GM12878 (cell line): ENCODE measurements at regions of chr10 and their contacts with region 1.

Region 1: DNA sequence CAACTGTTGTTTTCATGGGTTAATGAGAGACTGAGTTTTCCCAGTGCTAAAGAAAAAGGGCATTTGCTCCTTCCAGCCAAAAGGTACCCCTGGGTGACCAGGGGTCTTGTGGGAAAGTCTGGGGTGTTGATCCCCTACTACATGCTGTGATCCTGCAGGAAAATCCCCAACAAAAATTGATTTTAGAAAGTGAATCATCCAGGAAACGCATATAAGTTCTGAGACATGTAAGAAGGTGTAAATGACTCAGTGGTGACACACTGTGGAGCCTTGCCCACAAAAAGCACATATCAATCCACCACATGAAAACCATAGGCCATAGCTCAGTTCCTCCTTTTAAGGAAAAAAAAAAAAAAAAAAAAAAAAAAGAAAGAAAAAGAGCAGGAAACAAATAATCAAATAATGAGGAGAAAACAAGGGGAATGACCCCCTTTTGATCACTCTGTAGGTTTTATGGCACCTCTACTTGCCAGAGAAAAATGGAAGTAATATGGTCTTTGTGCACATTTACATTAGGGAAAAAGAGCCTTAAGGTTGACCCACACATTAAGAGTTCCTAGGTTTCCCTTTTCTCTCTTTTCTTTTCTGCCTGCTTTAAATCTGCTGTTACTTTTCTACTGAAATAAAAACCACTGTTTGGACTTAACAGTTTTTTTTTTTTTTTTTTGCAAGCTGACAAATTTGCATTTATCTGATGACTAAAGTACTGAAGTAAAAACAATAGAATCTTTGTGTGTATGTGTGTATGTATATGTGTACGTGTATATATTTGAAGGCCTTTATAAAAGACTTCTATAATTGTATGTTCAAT is 386.0 kb downstream of the KIF20B start:
- DNase-seq: peak; percentile 69
- ATAC-seq: peak; percentile 100
- H3K4me3 ChIP-seq: no peak overlapping the region
- H3K27ac ChIP-seq: peak overlapping the region; percentile 73
- H3K4me1 ChIP-seq: peaks cover 9% of the 10 kb centered on the region
- H3K27me3 ChIP-seq: no peaks in the 10 kb centered on the region
- CTCF ChIP-seq: peak in 1 of 3 experiments; percentile 22; a peak in 1 of 6 replicates
- EP300 ChIP-seq: peak; percentile 82 to 83; a peak in 3 of 4 replicates
- POLR2A ChIP-seq: no peak
- RAD21 ChIP-seq: peak; percentile 54

Region 2: GRCh38 chr10:89302625-89303024 is 784.8 kb before region 1 on chr10:
- CTCF ChIA-PET with region 1: no interaction called
- POLR2A ChIA-PET with region 1: no interaction called
- RAD21 ChIA-PET with region 1: no interaction called
- SMC1A ChIA-PET with region 1: no interaction called
- in situ Hi-C with region 1: no loop called
- intact Hi-C with region 1: no loop called
- DNase-seq: no peak
- ATAC-seq: peak; percentile 33
- H3K4me3 ChIP-seq: peak overlapping the region; percentile 79
- H3K27ac ChIP-seq: peak overlapping the region; percentile 64
- H3K4me1 ChIP-seq: peaks cover 3% of the 10 kb centered on the region
- H3K27me3 ChIP-seq: no peaks in the 10 kb centered on the region
- CTCF ChIP-seq: no peak
- EP300 ChIP-seq: no peak
- POLR2A ChIP-seq: no peak
- RAD21 ChIP-seq: no peak

Region 3: GRCh38 chr10:89904755-89905154 is 182.6 kb before region 1 on chr10:
- CTCF ChIA-PET with region 1: no interaction called
- POLR2A ChIA-PET with region 1: no interaction called
- RAD21 ChIA-PET with region 1: no interaction called
- SMC1A ChIA-PET with region 1: no interaction called
- in situ Hi-C with region 1: no loop called
- intact Hi-C with region 1: no loop called
- DNase-seq: no peak
- ATAC-seq: no peak
- H3K4me3 ChIP-seq: no peak overlapping the region
- H3K27ac ChIP-seq: no peak overlapping the region
- H3K4me1 ChIP-seq: no peaks in the 10 kb centered on the region
- H3K27me3 ChIP-seq: no peaks in the 10 kb centered on the region
- CTCF ChIP-seq: no peak
- EP300 ChIP-seq: no peak
- POLR2A ChIP-seq: no peak
- RAD21 ChIP-seq: no peak

Region 4: GRCh38 chr10:90066435-90066834 is 21.0 kb before region 1 on chr10:
- CTCF ChIA-PET with region 1: no interaction called
- POLR2A ChIA-PET with region 1: no interaction called
- RAD21 ChIA-PET with region 1: no interaction called
- SMC1A ChIA-PET with region 1: no interaction called
- in situ Hi-C with region 1: no loop called
- intact Hi-C with region 1: no loop called
- DNase-seq: no peak
- ATAC-seq: no peak
- H3K4me3 ChIP-seq: no peak overlapping the region
- H3K27ac ChIP-seq: no peak overlapping the region
- H3K4me1 ChIP-seq: no peaks in the 10 kb centered on the region
- H3K27me3 ChIP-seq: no peaks in the 10 kb centered on the region
- CTCF ChIP-seq: no peak
- EP300 ChIP-seq: no peak
- POLR2A ChIP-seq: no peak
- RAD21 ChIP-seq: no peak

Region 5: DNA sequence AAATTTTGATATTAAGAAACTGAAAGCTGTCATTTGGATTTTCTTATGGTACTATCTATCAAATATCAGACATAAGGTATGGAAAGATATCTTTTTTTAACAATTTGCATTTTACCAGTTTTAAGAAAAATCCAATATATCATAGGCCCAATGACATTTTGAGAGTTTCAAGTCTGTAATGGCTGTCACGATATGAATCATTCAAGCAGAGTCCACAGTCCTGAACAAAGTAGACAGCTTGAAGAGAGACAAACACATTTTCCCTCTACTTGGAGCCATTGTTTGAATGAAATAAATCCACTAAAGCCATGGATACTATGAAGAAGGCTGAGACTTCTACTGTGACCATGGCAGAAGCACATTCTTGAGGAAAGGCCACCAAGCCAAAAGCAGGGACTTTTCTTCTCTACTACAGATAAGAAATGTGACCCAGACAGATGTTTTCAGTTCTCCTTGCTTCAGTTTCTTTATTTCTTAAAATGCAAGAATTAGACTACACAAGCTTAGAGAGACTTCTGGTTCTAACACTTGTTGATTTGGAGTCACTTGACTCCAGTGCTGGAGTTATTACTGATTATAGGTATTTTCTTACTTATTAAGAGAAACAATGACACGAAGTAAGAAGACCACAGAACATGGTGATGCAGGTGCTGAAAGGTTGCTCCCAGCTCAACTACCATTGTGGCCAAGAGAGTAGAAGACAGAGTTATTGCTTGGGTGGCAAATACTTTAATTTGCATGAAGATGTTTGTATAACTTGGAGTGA is 43.1 kb after region 1 on chr10:
- CTCF ChIA-PET with region 1: interaction called, 3 read pairs
- POLR2A ChIA-PET with region 1: interaction called, 3 read pairs
- RAD21 ChIA-PET with region 1: interaction called, 3 read pairs
- SMC1A ChIA-PET with region 1: interaction called, 4 read pairs
- in situ Hi-C with region 1: no loop called
- intact Hi-C with region 1: loop called (anchors 5 kb)
- DNase-seq: peak; percentile 41
- ATAC-seq: peak; percentile 84
- H3K4me3 ChIP-seq: no peak overlapping the region
- H3K27ac ChIP-seq: peak overlapping the region; percentile 51
- H3K4me1 ChIP-seq: peaks cover 12% of the 10 kb centered on the region; the same call in 1 of the 2 replicates
- H3K27me3 ChIP-seq: no peaks in the 10 kb centered on the region
- CTCF ChIP-seq: no peak
- EP300 ChIP-seq: peak; percentile 20 to 37; a peak in 1 of 4 replicates
- POLR2A ChIP-seq: no peak
- RAD21 ChIP-seq: no peak

Region 6: GRCh38 chr10:90977162-90977854 is 889.9 kb after region 1 on chr10:
- CTCF ChIA-PET with region 1: no interaction called
- POLR2A ChIA-PET with region 1: no interaction called
- RAD21 ChIA-PET with region 1: no interaction called
- SMC1A ChIA-PET with region 1: no interaction called
- in situ Hi-C with region 1: no loop called
- intact Hi-C with region 1: no loop called
- DNase-seq: peak; percentile 76
- ATAC-seq: peak; percentile 91
- H3K4me3 ChIP-seq: no peak overlapping the region
- H3K27ac ChIP-seq: peak overlapping the region; percentile 74
- H3K4me1 ChIP-seq: peaks cover 10% of the 10 kb centered on the region
- H3K27me3 ChIP-seq: no peaks in the 10 kb centered on the region
- CTCF ChIP-seq: no peak
- EP300 ChIP-seq: no peak
- POLR2A ChIP-seq: no peak
- RAD21 ChIP-seq: no peak